Caco-2 (cell line): ENCODE measurements at regions of chr3 and their contacts with region 1.

Region 1: GRCh38 chr3:180959691-180960090 is 29.8 kb downstream of the DNAJC19 start:
- DNase-seq: no peak
- H3K4me3 ChIP-seq: no peak overlapping the region
- H3K4me3 Mint-ChIP-seq: no peak overlapping the region
- H3K27ac Mint-ChIP-seq: no peak overlapping the region
- H3K4me1 ChIP-seq: no peaks in the 10 kb centered on the region
- H3K4me1 Mint-ChIP-seq: no peaks in the 10 kb centered on the region
- H3K27me3 ChIP-seq: no peaks in the 10 kb centered on the region
- H3K27me3 Mint-ChIP-seq: no peaks in the 10 kb centered on the region
- CTCF ChIP-seq: no peak

Region 2: DNA sequence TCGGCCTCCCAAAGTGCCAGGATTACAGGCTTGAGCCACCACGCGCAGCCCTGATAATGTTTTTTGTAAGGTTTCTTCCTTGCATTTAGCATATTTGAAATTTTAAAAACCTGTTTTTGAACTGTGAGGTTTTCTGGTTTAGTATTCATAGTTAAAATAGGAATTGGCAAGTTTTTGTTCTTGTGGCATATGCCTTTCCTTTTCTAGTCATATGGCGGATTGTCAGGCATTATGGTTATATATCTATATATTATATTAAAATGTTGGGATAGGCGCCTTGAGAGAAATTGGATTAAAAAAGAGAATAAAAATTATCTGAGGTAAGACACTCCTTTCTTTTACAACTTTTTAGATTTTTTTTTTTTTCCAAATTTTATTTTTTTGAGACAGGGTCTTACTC is 18.9 kb before region 1 on chr3:
- CTCF ChIA-PET with region 1: no interaction called
- POLR2A ChIA-PET with region 1: interaction called, 4 read pairs
- intact Hi-C with region 1: loop called (anchors 2 kb)
- DNase-seq: no peak
- H3K4me3 ChIP-seq: no peak overlapping the region
- H3K4me3 Mint-ChIP-seq: no peak overlapping the region
- H3K27ac Mint-ChIP-seq: no peak overlapping the region
- H3K4me1 ChIP-seq: no peaks in the 10 kb centered on the region
- H3K4me1 Mint-ChIP-seq: no peaks in the 10 kb centered on the region
- H3K27me3 ChIP-seq: no peaks in the 10 kb centered on the region
- H3K27me3 Mint-ChIP-seq: no peaks in the 10 kb centered on the region
- CTCF ChIP-seq: no peak

Region 3: DNA sequence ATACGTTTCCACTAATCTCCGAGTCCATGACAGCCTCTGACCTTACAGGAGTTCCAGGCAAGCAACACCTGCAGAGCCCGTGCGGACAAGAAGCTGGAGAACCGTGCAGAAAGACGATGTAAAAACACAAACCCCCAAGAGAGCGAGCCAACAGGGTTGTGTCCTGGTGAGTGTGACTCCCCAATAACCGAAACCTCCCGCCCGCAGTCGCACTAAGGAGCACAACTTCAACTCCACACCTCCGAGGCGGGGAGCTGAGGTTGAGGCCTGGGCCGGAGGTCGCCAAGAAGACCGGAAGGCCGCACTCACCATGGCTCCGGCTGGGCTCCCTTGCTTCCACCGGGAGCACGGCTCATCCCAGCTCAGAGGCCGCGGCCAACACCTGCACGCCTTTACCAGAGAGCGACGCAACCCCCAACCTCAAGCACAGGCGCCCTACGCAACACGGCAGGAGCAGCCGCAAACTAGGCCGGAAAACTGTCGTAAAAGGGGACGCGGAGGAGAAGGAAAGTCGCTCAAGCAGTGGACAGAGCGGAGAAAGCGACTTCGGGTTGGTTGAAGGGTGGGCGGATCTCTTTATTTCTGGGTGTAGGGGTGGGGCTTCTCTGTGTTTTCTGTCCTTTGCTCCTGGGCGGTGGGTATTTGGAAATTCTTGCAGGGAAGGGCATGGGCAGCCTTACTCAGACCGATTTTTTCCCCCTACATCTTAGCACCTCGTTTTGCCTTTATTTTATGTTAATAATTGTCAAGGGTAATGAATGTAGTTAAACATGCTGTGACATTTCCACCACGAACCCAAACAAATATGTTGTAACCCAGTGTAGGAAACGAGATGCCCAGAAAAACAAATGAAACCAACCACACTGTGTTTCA is 29.8 kb after region 1 on chr3 and contains the start of gene DNAJC19:
- CTCF ChIA-PET with region 1: no interaction called
- POLR2A ChIA-PET with region 1: interaction called, 13 read pairs
- intact Hi-C with region 1: no loop called
- DNase-seq: peak; percentile 93 to 96
- H3K4me3 ChIP-seq: peak within 1 kb of the TSS; percentile 68
- H3K4me3 Mint-ChIP-seq: peak within 1 kb of the TSS; percentile 100
- H3K27ac Mint-ChIP-seq: peak within 1 kb of the TSS; percentile 99
- H3K4me1 ChIP-seq: no peaks in the 10 kb centered on the region
- H3K4me1 Mint-ChIP-seq: no peaks in the 10 kb centered on the region
- H3K27me3 ChIP-seq: no peaks in the 10 kb centered on the region
- H3K27me3 Mint-ChIP-seq: peaks cover 7% of the 10 kb centered on the region
- CTCF ChIP-seq: no peak
- total RNA-seq, gene DNAJC19: 55.4 and 71.8 TPM in 2 replicates